Pancreas (tissue), 10 donors: ENCODE measurements at regions of chr1 and their contacts with region 1.

Region 1: DNA sequence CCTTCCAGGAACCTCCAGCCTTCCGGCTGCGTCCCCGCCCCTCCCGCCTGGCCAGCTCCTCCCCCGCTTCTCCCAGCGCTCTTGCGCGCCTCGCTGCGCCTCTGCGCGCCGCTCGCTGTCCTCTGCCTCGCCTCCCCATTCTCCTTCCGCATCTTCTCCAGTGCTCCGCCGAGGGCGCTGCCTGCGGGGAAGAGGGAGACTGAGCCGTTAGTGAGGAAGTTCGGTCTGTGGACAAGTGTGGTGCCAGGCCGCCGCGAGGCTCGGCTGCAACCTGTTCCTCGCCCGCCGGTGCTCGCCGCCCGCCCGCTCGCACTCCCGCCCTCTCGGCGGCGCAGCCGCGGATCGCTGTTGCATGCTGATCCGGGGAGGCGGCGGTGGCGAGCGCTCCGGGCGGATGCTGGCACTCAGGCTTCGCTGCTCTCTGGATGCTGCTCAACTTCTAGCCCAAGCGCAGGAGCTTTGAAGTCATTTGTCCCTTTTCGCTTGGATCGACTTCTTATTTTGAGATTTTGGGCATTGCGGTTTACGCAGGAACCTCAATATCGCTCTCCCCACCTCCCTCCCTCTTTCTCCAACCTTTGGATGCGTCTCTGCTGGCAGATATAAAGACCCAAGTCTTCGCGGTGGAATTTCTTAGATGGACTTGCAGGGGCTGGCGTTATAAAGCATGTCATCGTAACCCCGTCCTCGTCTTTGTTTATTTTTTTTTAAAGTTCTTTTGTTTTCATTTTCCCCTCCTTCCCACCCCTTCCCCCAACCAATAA is 614 bp upstream of the CACNA1E start:
- DNase-seq: peak in 1 of 6 donors; percentile 77
- ATAC-seq: peak; percentile 28 to 76 (median 56)
- H3K4me3 ChIP-seq: peak overlapping the region in 3 of 4 donors; percentile 5 to 39 (median 6)
- H3K27ac ChIP-seq: no peak overlapping the region
- H3K4me1 ChIP-seq: no peaks in the 10 kb centered on the region
- H3K27me3 ChIP-seq: peaks cover 0 to 37% (median 4%) of the 10 kb centered on the region in 4 donors
- CTCF ChIP-seq: no peak

Region 2: DNA sequence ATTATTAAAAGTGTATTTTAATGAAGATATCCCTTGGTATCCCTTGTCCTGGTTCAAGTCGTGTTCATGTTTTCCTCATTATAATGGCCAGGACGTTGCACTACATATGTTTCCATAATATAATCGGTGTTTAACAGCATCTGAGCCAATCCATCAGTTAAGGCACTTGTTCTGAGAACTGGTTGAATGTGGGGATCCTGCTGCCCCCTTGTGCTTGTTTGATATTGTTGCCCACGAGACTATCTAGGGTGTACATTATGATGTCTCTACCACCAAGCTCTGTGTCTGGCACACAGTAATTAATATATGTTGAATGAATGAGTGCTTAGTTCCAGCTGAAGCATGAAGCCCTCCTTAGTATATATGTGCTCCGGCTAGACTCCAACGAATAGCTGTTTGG is 193.6 kb after region 1 on chr1:
- intact Hi-C with region 1: loop called in 1 of 3 experiments (anchors 10 kb)
- DNase-seq: no peak
- ATAC-seq: peak in 3 of 4 donors; percentile 40 to 53 (median 44)
- H3K4me3 ChIP-seq: no peak overlapping the region
- H3K27ac ChIP-seq: no peak overlapping the region
- H3K4me1 ChIP-seq: no peaks in the 10 kb centered on the region
- H3K27me3 ChIP-seq: peaks cover 0 to 3% (median 0%) of the 10 kb centered on the region in 4 donors
- CTCF ChIP-seq: peak in 1 of 4 donors; percentile 7

Region 3: DNA sequence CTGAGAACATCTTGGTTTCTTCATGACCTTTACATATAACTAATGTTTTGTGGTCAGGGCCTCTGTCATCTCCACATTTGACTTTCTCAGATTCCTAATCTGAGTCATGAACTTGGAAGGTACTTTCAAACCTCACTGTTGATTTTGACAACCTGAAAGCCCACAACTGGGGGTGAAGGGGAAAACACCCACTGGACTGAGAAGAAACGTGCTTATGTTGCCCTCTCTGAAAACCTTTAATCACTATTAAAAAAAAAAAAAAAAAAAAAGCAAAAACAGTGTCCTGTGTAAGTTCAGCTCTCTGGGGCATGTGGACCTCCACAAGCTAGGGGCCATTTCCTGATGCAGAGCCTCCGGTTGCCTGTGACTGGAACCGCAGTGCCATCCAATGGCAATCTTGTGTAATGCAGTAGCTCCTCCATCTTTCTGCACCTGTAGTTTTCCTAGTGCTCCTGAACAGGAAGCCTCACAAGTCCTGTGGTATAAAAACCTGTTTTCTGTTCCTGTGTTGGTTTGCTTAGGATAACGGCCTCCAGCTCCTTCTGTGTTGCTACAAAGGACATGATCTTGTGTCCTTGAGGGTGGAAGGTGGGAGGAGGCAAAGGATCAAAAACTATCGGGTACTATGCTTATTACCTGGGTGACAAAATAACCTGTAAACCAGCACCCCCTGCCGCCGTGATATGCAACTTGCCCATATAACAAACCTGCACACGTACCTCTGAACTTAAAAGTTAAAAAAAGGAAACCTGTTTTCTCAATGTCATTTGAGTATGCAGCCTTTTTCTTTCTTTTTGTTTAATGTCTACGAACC is 454.3 kb after region 1 on chr1:
- intact Hi-C with region 1: loop called in 2 of 3 experiments (anchors 10 kb)
- DNase-seq: peak in 5 of 6 donors; percentile 29 to 67 (median 43)
- ATAC-seq: peak; percentile 95 to 100 (median 98)
- H3K4me3 ChIP-seq: peak overlapping the region in 1 of 4 donors; percentile 23
- H3K27ac ChIP-seq: no peak overlapping the region
- H3K4me1 ChIP-seq: no peaks in the 10 kb centered on the region
- H3K27me3 ChIP-seq: no peaks in the 10 kb centered on the region
- CTCF ChIP-seq: peak; percentile 12 to 36 (median 22)

Region 4: GRCh38 chr1:181947441-181947840 is 464.7 kb after region 1 on chr1:
- intact Hi-C with region 1: loop called in 1 of 3 experiments (anchors 10 kb)
- DNase-seq: no peak
- ATAC-seq: no peak
- H3K4me3 ChIP-seq: no peak overlapping the region
- H3K27ac ChIP-seq: no peak overlapping the region
- H3K4me1 ChIP-seq: no peaks in the 10 kb centered on the region
- H3K27me3 ChIP-seq: no peaks in the 10 kb centered on the region
- CTCF ChIP-seq: no peak

Region 5: DNA sequence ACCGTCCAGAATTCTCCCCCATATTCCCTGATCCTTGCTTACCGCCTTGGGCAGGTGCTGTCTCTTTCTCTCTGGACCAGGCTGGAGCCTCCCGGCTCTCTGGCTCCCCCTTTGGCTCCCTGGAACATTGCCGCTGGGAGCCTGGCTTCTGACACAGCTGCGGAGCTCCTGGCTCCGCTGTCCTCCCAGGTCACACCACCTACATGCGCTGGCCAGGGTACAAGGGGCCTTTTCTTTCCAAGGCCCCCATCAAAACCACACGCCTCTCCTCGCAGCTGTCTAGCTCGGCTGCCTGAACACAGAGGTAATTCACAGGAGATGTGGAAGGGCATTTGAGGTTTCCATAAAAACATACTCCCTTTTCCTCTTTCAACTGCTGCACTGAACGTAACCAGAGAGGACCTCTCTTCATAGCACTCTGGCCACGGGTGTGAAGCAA is 586.3 kb after region 1 on chr1:
- intact Hi-C with region 1: loop called in 1 of 3 experiments (anchors 10 kb)
- DNase-seq: peak; percentile 52 to 90 (median 84)
- ATAC-seq: peak; percentile 97 to 100 (median 99)
- H3K4me3 ChIP-seq: no peak overlapping the region
- H3K27ac ChIP-seq: no peak overlapping the region
- H3K4me1 ChIP-seq: no peaks in the 10 kb centered on the region
- H3K27me3 ChIP-seq: no peaks in the 10 kb centered on the region
- CTCF ChIP-seq: peak; percentile 67 to 83 (median 78)